MCF 10A (cell line): ENCODE measurements at regions of chr16 and their contacts with region 1.

Region 1: DNA sequence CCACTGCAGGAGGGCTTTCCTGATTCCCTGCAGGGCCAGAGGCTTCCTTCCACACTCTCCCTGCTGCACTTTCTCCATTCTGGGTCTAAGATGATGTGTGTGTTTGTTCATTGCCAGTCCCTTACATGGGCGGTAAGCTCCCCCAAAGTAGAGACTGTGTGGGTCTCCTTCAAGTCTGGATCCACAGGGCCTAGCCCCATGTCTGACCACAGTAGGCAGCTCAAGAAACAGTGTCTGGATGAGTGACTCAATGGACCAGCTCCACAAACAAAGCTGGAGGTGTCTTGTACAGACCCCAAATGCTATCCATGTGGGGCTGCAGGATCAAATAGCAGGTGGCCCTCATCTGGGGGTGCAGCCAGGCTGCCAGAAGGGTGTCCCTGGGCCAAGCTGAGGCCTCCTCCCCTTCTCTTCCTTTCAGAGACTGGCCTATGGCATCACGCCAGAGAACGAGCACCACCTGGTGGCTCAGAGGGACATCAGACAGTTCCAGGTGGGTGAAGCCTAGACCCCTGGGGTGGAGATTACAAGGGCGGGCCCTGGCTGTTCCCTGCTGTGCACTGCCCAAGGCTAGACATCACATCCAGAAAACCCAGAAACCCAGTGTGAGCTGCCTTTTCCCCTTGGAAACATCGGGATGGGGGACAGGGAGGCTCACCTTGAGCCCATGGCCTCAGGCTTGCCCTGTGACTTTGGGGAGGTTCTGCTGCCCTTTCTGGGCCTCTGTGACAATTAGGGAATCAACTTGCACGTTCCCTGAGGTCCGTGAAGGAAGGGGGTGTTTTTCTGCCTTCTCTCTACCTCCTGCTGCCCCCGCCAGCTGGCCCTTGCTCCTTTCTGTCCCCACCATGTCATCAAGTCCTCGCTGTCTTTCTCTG is 45.9 kb downstream of the SLC6A2 start:
- DNase-seq: peak; percentile 70
- H3K4me3 Mint-ChIP-seq: no peak overlapping the region
- H3K27ac Mint-ChIP-seq: no peak overlapping the region
- H3K4me1 Mint-ChIP-seq: no peaks in the 10 kb centered on the region
- H3K27me3 Mint-ChIP-seq: peaks cover 14% of the 10 kb centered on the region
- CTCF ChIP-seq: peak; percentile 65

Region 2: DNA sequence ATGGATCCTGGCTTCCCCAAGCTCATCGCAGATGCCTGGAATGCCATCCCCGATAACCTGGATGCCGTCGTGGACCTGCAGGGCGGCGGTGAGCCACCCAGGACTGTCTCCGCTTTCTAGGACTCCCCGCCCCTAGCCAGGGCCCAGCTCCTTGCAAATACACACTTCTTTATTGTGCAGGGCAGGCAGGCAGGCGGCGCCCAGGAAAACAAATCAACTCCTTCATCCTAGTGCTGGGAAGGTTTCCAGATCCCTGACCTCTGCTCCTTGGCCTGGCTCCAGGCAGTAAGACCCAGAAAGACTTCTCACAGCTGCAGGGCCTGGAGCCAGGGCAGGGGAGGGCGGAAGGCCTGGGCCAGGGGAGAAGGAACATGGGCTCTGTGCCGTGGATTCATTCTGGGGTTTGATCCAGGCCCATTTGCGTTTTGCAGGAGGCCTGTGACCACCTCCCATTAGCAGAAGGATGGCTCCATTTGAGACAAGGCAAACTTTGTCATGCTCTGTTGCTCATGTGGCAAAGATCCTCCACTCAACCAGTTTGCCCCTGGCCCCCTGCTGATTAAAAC is 198.8 kb before region 1 on chr16:
- CTCF ChIA-PET with region 1: interaction called, 53 read pairs
- POLR2A ChIA-PET with region 1: no interaction called
- intact Hi-C with region 1: no loop called
- DNase-seq: peak; percentile 93
- H3K4me3 Mint-ChIP-seq: no peak overlapping the region
- H3K27ac Mint-ChIP-seq: no peak overlapping the region
- H3K4me1 Mint-ChIP-seq: peaks cover 26% of the 10 kb centered on the region
- H3K27me3 Mint-ChIP-seq: no peaks in the 10 kb centered on the region
- CTCF ChIP-seq: no peak

Region 3: GRCh38 chr16:55559233-55559632 is 142.4 kb before region 1 on chr16:
- CTCF ChIA-PET with region 1: interaction called, 13 read pairs
- POLR2A ChIA-PET with region 1: no interaction called
- intact Hi-C with region 1: no loop called
- DNase-seq: peak; percentile 69
- H3K4me3 Mint-ChIP-seq: peak overlapping the region; percentile 22
- H3K27ac Mint-ChIP-seq: peak overlapping the region; percentile 32
- H3K4me1 Mint-ChIP-seq: peaks cover 65% of the 10 kb centered on the region
- H3K27me3 Mint-ChIP-seq: no peaks in the 10 kb centered on the region
- CTCF ChIP-seq: no peak

Region 4: GRCh38 chr16:55577887-55578286 is 123.8 kb before region 1 on chr16:
- CTCF ChIA-PET with region 1: interaction called, 10 read pairs
- POLR2A ChIA-PET with region 1: no interaction called
- intact Hi-C with region 1: no loop called
- DNase-seq: no peak
- H3K4me3 Mint-ChIP-seq: no peak overlapping the region
- H3K27ac Mint-ChIP-seq: no peak overlapping the region
- H3K4me1 Mint-ChIP-seq: peaks cover 8% of the 10 kb centered on the region
- H3K27me3 Mint-ChIP-seq: no peaks in the 10 kb centered on the region
- CTCF ChIP-seq: no peak

Region 5: GRCh38 chr16:55647798-55648197 is 53.9 kb before region 1 on chr16:
- CTCF ChIA-PET with region 1: interaction called, 3 read pairs
- POLR2A ChIA-PET with region 1: no interaction called
- intact Hi-C with region 1: loop called (anchors 1 kb)
- DNase-seq: no peak
- H3K4me3 Mint-ChIP-seq: no peak overlapping the region
- H3K27ac Mint-ChIP-seq: no peak overlapping the region
- H3K4me1 Mint-ChIP-seq: no peaks in the 10 kb centered on the region
- H3K27me3 Mint-ChIP-seq: peaks cover 11% of the 10 kb centered on the region
- CTCF ChIP-seq: no peak

Region 6: DNA sequence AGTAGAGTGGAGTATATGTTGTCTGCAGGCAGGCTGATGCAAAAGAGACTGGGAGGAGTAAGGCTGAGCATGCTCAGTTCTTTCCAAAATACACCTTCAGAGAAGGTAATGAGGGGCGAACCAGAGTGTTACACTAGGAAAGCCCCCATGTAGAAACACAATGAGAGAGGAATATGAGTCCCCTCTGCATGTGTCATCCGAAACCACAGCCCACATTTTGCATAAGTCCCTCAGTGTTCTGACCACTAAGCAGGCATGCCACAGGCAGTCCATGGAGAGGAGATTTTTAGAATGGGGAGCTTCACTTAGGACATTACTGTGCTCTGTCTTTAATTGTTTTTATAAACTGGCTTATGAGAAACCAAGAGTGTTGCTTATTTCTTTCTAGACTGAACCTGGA is 13.9 kb before region 1 on chr16:
- CTCF ChIA-PET with region 1: interaction called, 26 read pairs
- POLR2A ChIA-PET with region 1: interaction called, 3 read pairs
- intact Hi-C with region 1: no loop called
- DNase-seq: no peak
- H3K4me3 Mint-ChIP-seq: no peak overlapping the region
- H3K27ac Mint-ChIP-seq: no peak overlapping the region
- H3K4me1 Mint-ChIP-seq: no peaks in the 10 kb centered on the region
- H3K27me3 Mint-ChIP-seq: peaks cover 38% of the 10 kb centered on the region
- CTCF ChIP-seq: no peak

Region 7: GRCh38 chr16:55842369-55843104 is 140.9 kb after region 1 on chr16:
- CTCF ChIA-PET with region 1: interaction called, 55 read pairs
- POLR2A ChIA-PET with region 1: no interaction called
- intact Hi-C with region 1: no loop called
- DNase-seq: peak; percentile 66
- H3K4me3 Mint-ChIP-seq: no peak overlapping the region
- H3K27ac Mint-ChIP-seq: no peak overlapping the region
- H3K4me1 Mint-ChIP-seq: no peaks in the 10 kb centered on the region
- H3K27me3 Mint-ChIP-seq: peaks cover 19% of the 10 kb centered on the region
- CTCF ChIP-seq: peak; percentile 59